ENCODE measurements at regions of chr5 and their contacts with region 1.

Region 1: DNA sequence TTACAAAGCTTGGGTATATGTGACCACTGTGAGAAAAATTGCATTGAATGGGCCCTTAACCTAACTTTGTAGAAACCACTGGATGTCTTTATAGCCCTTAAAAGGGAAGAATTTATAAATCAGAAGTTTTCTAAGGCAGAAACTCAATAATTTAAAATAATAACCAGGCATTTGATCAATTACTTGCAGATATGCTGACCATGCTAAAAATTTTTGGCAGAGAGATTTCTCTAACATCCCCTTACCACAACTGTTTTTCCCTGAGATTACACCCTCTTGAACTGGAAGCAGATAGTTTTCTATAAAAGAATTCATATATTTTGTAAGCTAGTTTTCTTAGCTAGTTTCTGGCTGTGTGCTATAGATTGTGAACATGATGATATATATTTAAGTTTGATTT is 428.3 kb downstream of the KIF4B start:
- DNase-seq: no peak
- ATAC-seq: no peak
- H3K4me3 ChIP-seq: no peak overlapping the region
- H3K27ac ChIP-seq: no peak overlapping the region
- H3K4me1 ChIP-seq: no peaks in the 10 kb centered on the region
- H3K27me3 ChIP-seq: no peaks in the 10 kb centered on the region
- CTCF ChIP-seq: no peak

Region 2: DNA sequence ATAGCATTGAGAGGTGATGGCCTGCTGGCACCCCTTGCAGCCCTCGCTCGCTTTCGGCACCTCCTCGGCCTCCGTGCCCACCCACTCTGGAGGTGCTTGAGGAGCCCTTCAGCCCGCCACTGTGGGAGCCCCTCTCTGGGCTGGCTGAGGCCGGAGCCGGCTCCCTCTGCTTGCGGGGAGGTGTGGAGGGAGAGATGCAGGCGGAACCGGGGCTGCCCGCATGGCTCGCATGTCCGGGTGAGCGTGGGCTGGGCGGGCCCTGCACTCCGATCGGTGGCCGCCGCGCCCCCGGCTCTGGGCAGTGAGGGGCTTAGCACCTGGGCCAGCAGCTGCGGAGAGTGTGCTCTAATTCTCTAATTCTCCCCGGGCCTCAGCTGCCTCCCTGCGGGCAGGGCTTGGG is 327.2 kb before region 1 on chr5:
- CTCF ChIA-PET with region 1: no interaction called
- POLR2A ChIA-PET with region 1: no interaction called
- intact Hi-C with region 1: no loop called
- DNase-seq: no peak
- ATAC-seq: no peak
- H3K4me3 ChIP-seq: no peak overlapping the region
- H3K27ac ChIP-seq: no peak overlapping the region
- H3K4me1 ChIP-seq: no peaks in the 10 kb centered on the region
- H3K27me3 ChIP-seq: no peaks in the 10 kb centered on the region
- CTCF ChIP-seq: no peak

Region 3: GRCh38 chr5:156893517-156893916 is 1451.7 kb after region 1 on chr5:
- CTCF ChIA-PET with region 1: no interaction called
- POLR2A ChIA-PET with region 1: no interaction called
- intact Hi-C with region 1: no loop called
- DNase-seq: no peak
- ATAC-seq: no peak
- H3K4me3 ChIP-seq: no peak overlapping the region
- H3K27ac ChIP-seq: no peak overlapping the region
- H3K4me1 ChIP-seq: no peaks in the 10 kb centered on the region
- H3K27me3 ChIP-seq: peaks cover 23% of the 10 kb centered on the region
- CTCF ChIP-seq: no peak

Region 4: GRCh38 chr5:157189223-157189622 is 1747.4 kb after region 1 on chr5:
- CTCF ChIA-PET with region 1: no interaction called
- POLR2A ChIA-PET with region 1: interaction called, 19 read pairs
- intact Hi-C with region 1: no loop called
- DNase-seq: no peak
- ATAC-seq: no peak
- H3K4me3 ChIP-seq: no peak overlapping the region
- H3K27ac ChIP-seq: no peak overlapping the region
- H3K4me1 ChIP-seq: no peaks in the 10 kb centered on the region
- H3K27me3 ChIP-seq: peaks cover 90% of the 10 kb centered on the region
- CTCF ChIP-seq: no peak

Measured in PC-3 (cell line).